ENCODE measurements at regions of chr10 and their contacts with region 1.

Region 1: GRCh38 chr10:103244663-103245271 is 920 bp upstream of the RPEL1 start:
- DNase-seq: peak; percentile 83
- H3K4me3 ChIP-seq: no peak overlapping the region
- H3K27ac ChIP-seq: no peak overlapping the region
- H3K4me1 ChIP-seq: no peaks in the 10 kb centered on the region
- H3K27me3 ChIP-seq: no peaks in the 10 kb centered on the region
- CTCF ChIP-seq: peak; percentile 73 to 91 (median 80)
- POLR2A ChIP-seq: no peak

Region 2: DNA sequence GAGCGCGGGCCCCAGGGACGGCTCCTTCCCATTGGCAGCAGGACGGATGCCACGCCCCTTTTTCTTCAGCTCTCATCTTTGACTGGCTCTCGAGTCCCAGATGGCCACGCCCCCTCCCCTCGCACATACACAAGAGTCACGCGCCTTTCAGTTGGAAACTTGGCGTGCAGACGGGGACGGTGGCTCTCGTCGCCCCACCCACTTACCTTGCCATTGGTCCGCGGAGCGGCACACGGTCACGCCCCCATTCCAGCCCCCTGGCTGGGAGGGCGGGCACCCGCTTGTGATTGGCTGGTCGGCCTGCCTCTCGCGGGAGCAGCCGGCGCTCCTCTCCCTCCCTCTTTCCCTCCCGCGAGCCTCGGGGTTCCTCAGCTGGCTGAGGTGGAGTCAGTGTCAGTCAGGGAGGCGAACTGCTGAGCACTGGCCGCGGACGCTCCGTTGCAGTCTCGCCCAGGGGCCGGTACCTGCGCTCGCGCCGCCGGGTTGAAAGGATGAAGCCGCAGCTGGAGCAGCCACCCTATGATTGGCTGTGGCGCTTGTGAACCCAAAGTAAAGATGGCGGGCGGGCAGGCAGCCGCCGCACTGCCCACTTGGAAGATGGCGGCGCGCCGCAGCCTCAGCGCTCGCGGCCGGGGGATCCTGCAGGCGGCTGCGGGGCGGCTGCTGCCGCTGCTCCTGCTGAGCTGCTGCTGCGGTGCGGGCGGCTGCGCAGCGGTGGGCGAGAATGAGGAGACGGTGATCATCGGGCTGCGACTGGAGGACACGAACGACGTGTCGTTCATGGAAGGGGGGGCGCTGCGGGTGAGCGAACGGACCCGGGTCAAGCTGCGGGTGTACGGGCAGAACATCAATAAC is 326.6 kb before region 1 on chr10 and contains the start of gene CNNM2:
- intact Hi-C with region 1: loop called (anchors 10 kb)
- DNase-seq: peak; percentile 100
- H3K4me3 ChIP-seq: peak within 1 kb of the TSS; percentile 84 to 93
- H3K27ac ChIP-seq: peak within 1 kb of the TSS; percentile 91 to 95
- H3K4me1 ChIP-seq: peaks cover 3% of the 10 kb centered on the region
- H3K27me3 ChIP-seq: no peaks in the 10 kb centered on the region
- CTCF ChIP-seq: peak in 1 of 3 experiments; percentile 20
- POLR2A ChIP-seq: no peak
- total RNA-seq, gene CNNM2: 24.2 to 30.5 TPM

Region 3: GRCh38 chr10:103069453-103070331 is 175.1 kb before region 1 on chr10:
- intact Hi-C with region 1: loop called (anchors 10 kb)
- DNase-seq: peak; percentile 74
- H3K4me3 ChIP-seq: no peak overlapping the region
- H3K27ac ChIP-seq: no peak overlapping the region
- H3K4me1 ChIP-seq: no peaks in the 10 kb centered on the region
- H3K27me3 ChIP-seq: no peaks in the 10 kb centered on the region
- CTCF ChIP-seq: peak; percentile 56 to 68 (median 62)
- POLR2A ChIP-seq: no peak

Region 4: DNA sequence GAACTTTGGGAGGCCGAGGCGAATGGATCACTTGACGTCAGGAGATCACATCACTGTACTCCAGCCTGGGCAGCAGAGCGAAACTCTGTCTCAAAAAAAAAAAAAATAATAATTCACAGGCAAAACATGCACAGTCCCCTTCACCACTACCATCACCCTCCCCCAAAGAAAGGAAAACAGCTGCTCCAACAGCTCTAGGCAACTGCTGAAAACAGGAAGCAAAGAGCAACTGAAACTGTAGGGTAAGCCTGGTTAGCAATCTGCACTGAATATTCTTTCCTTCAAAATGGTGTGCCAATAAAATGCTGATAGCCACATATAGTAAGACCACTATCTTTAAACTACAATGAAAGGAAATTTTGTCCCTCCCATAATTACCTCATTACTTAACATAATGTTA is 63.5 kb before region 1 on chr10:
- intact Hi-C with region 1: no loop called
- DNase-seq: no peak
- H3K4me3 ChIP-seq: no peak overlapping the region
- H3K27ac ChIP-seq: no peak overlapping the region
- H3K4me1 ChIP-seq: peaks cover 12% of the 10 kb centered on the region
- H3K27me3 ChIP-seq: no peaks in the 10 kb centered on the region
- CTCF ChIP-seq: no peak
- POLR2A ChIP-seq: no peak

Region 5: GRCh38 chr10:103333925-103334520 is 89.3 kb after region 1 on chr10:
- intact Hi-C with region 1: no loop called
- DNase-seq: no peak
- H3K4me3 ChIP-seq: no peak overlapping the region
- H3K27ac ChIP-seq: no peak overlapping the region
- H3K4me1 ChIP-seq: no peaks in the 10 kb centered on the region
- H3K27me3 ChIP-seq: no peaks in the 10 kb centered on the region
- CTCF ChIP-seq: peak; percentile 11 to 78 (median 23)
- POLR2A ChIP-seq: no peak